H1 (cell line): ENCODE measurements at regions of chr1 and their contacts with region 1.

Region 1: DNA sequence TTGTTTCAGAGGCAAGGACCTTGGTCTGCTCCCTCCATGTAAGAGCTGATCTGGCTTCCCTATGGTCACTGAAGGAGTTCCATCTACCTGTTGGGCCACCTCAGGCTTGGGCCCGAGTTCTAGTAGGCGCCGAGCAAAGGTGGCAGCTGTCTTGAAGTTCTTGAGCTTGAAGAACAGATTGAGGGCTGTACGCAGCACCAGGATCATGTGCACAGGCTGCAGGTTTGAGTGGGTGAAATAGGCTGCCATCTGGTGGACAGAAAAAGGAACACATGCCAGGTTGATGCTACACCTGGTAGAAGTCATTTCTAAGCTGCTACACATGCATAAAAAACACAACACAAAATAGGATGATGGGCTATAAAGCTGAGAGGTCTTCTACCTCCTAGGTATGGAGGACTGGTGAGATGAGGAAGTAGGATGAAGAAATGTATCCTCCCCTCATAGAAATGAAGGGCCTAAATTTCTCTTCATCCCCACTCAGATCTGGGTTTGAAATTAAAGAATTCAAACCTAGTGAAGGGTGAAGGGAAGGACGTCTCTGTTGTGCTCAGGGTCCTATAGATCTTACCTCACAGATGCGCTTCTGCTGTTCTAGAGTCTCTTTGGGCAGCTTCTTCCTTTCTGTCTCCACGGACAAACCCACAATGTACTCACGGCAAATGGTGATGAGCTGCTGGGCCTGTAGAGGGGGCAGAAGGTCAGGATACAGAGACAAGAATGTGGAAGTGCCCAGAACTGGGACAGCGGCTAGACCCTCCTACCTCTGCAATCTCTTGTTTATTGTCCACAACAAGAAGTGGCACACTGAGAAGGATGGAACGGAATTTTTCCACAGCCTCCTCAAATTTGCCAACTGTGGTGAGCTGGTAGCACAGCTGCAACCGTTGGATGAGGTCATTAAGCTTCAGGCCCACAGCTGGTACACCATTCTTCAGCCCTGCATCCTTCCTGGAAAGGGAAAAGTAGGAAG is 6.6 kb upstream of the PEX19 start:
- DNase-seq: peak in 1 of 2 experiments; percentile 62
- H3K4me3 ChIP-seq: no peak overlapping the region
- H3K27ac ChIP-seq: no peak overlapping the region
- H3K4me1 ChIP-seq: no peaks in the 10 kb centered on the region
- H3K27me3 ChIP-seq: no peaks in the 10 kb centered on the region
- CTCF ChIP-seq: peak; percentile 69 to 94 (median 71)
- EP300 ChIP-seq: no peak
- POLR2A ChIP-seq: no peak
- RAD21 ChIP-seq: peak; percentile 58 to 59

Region 2: DNA sequence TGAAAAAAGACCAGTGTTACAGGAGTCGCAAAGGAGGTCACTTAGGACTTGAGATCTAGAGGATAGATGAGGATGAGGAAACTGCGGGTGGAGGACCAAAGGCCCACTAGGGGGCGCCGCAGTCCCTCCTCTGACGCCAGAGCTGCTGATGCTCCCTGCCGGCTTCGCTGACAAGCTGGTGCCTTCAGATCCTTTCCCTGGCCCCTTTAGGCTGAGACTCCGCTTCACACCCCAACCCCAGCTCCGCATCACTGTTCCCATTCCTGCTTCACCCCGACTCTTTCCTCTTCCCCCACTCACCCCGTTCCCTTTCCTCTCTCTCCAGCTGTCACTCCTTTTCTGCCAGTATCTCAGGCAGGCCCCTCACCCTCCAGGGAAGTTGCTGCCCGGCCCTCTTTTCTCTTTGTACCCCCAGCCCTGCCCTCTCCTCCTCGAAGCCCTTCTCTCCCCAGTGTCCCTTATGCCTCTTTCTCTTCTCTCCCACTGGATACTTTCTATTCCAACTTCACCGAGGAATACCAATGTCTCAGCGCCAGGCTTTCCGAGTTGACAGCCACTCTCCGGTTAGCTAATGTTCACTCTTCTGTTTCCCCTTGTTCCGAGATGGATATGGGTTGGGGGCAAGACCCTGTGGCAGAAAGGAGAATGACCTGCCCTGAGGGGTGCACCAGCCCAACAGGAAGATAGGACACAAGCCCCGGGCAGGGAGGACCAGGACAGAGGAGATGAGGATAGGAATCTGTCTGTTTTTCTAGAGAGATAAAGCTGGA is 205.7 kb before region 1 on chr1:
- CTCF ChIA-PET with region 1: interaction called, 16 read pairs
- POLR2A ChIA-PET with region 1: interaction called, 5 read pairs
- DNase-seq: peak; percentile 88 to 96
- H3K4me3 ChIP-seq: no peak overlapping the region
- H3K27ac ChIP-seq: no peak overlapping the region
- H3K4me1 ChIP-seq: peaks cover 0 to 5% (median 3%) of the 10 kb centered on the region in 4 experiments; a peak in 4 of 7 replicates
- H3K27me3 ChIP-seq: peaks cover 0 to 35% (median 27%) of the 10 kb centered on the region in 4 experiments; a peak in 6 of 7 replicates
- CTCF ChIP-seq: peak; percentile 91 to 99 (median 95)
- EP300 ChIP-seq: no peak
- POLR2A ChIP-seq: no peak
- RAD21 ChIP-seq: peak; percentile 83 to 88

Region 3: GRCh38 chr1:160161965-160162705 is 129.4 kb before region 1 on chr1:
- CTCF ChIA-PET with region 1: interaction called, 19 read pairs
- POLR2A ChIA-PET with region 1: no interaction called
- DNase-seq: peak; percentile 54 to 73
- H3K4me3 ChIP-seq: no peak overlapping the region
- H3K27ac ChIP-seq: no peak overlapping the region
- H3K4me1 ChIP-seq: peaks cover 0 to 3% (median 1%) of the 10 kb centered on the region in 4 experiments; a peak in 3 of 7 replicates
- H3K27me3 ChIP-seq: no peaks in the 10 kb centered on the region; a peak in 2 of 7 replicates
- CTCF ChIP-seq: peak; percentile 87 to 98 (median 95)
- EP300 ChIP-seq: no peak
- POLR2A ChIP-seq: no peak
- RAD21 ChIP-seq: peak; percentile 93 to 96

Region 4: DNA sequence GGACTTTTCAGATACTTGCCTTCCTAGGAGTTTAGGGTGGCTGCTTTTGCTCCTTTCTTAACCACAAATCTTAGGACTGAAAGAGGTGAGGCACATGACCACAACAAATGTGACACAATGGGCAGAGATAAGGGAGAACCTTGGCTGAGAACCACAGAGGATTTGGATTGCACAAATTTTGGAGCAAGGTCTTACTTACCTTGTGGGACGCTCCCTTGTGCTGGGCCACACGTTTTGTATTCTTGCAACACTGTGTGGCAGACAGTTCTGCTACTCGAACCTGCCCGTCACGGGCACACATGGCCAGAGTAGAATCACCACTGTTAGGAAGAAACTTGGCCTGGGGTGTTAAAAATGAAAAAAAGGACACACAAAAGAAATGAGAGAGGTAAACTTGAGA is 53.1 kb before region 1 on chr1:
- CTCF ChIA-PET with region 1: interaction called, 24 read pairs
- POLR2A ChIA-PET with region 1: no interaction called
- DNase-seq: no peak
- H3K4me3 ChIP-seq: no peak overlapping the region
- H3K27ac ChIP-seq: no peak overlapping the region
- H3K4me1 ChIP-seq: no peaks in the 10 kb centered on the region
- H3K27me3 ChIP-seq: no peaks in the 10 kb centered on the region
- CTCF ChIP-seq: no peak
- EP300 ChIP-seq: no peak
- POLR2A ChIP-seq: no peak
- RAD21 ChIP-seq: no peak

Region 5: DNA sequence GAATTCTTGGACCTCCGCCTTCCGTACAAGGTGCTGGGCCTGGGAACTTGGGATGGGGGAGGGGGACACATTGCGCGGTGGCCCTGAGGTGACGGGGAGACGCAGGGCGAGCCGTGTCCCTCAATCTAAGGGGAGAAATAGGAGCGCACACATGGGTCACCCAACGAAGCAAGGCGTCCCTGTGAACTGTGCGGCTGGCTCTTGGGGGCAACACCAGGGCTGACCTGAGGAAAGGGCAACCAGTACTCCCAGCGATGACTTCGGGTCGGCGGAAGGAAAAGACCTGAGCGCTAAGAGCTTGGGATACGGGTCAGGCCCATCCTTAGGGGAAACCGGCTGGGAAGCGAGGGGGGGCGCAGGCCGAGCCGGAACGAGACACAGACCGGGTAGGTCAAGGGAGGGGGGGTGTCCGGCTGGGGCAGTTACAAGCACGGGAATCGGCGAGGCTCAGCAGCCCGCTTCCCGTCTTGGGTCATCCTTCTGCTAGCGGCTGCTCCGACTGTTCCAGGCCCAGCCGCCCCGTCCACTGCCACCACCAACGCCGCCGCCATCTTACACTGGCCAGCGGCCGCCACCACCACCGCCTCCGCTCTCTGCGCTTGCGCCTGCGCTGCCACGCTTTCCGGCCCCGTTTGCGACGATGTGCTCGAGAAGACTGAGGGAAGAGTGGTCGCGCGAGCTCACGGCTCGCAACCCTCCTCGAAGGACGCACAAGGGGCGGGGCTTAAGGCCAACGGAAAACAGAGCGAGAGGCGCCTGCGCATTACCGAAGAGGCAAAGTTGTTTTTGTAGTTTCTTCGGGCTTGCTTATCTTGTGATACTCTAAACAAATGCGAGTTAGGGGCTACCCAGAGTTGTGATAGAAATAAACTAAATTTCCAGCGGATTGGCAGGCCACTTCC is 29.4 kb before region 1 on chr1 and contains the start of gene DCAF8:
- CTCF ChIA-PET with region 1: interaction called, 28 read pairs
- POLR2A ChIA-PET with region 1: interaction called, 79 read pairs
- DNase-seq: peak; percentile 92 to 98
- H3K4me3 ChIP-seq: peak within 1 kb of the TSS; percentile 91 to 99 (median 96)
- H3K27ac ChIP-seq: peak within 1 kb of the TSS; percentile 97
- H3K4me1 ChIP-seq: peaks cover 2 to 13% (median 5%) of the 10 kb centered on the region in 4 experiments; a peak in 6 of 7 replicates
- H3K27me3 ChIP-seq: no peaks in the 10 kb centered on the region
- CTCF ChIP-seq: no peak
- EP300 ChIP-seq: no peak
- POLR2A ChIP-seq: peak; percentile 98 to 99
- RAD21 ChIP-seq: no peak
- total RNA-seq, gene DCAF8: 110 and 113 TPM in 2 replicates

Region 6: GRCh38 chr1:160307118-160307854 is 15.8 kb after region 1 on chr1:
- CTCF ChIA-PET with region 1: interaction called, 83 read pairs
- POLR2A ChIA-PET with region 1: interaction called, 11 read pairs
- DNase-seq: peak in 1 of 2 experiments; percentile 56
- H3K4me3 ChIP-seq: 0 out of 8 replicates have a peak overlapping the region, but pooled peaks of 1 of the 4 experiments have one; percentile 12
- H3K27ac ChIP-seq: no peak overlapping the region
- H3K4me1 ChIP-seq: peaks cover 4 to 11% (median 8%) of the 10 kb centered on the region in 4 experiments
- H3K27me3 ChIP-seq: no peaks in the 10 kb centered on the region
- CTCF ChIP-seq: no peak
- EP300 ChIP-seq: no peak
- POLR2A ChIP-seq: no peak
- RAD21 ChIP-seq: no peak

Region 7: DNA sequence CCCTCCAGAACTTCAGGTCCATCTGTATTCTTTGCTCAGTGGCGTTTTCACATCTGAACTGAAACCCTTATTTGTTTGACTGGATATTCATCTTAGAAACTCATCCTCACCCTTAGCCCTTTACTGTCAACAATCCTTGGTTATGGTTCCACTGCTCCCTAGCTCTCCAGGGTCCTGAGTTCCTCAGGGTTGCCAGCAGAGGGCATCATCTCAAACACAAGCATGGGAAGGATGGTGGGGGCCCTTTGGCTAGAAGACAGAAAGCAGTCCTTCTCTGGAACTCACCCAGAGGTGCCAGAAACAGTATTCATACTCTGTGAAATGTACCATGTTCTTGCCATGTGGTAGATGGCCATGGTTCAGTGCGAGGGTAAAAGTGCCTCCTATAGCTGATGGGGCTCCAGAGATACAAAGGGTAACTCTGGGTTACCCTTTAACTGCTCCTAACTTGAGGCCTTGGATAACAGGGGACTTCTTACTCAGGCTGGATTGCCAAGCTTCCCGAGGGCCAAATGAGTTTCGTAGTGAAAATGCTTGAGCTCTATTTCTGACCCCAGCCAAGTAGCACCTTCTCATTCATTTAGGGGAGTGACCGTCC is 63.0 kb after region 1 on chr1:
- CTCF ChIA-PET with region 1: interaction called, 27 read pairs
- POLR2A ChIA-PET with region 1: no interaction called
- DNase-seq: no peak
- H3K4me3 ChIP-seq: no peak overlapping the region
- H3K27ac ChIP-seq: no peak overlapping the region
- H3K4me1 ChIP-seq: no peaks in the 10 kb centered on the region
- H3K27me3 ChIP-seq: no peaks in the 10 kb centered on the region
- CTCF ChIP-seq: peak; percentile 78 to 83 (median 81)
- EP300 ChIP-seq: no peak
- POLR2A ChIP-seq: no peak
- RAD21 ChIP-seq: peak; percentile 65 to 76

Region 8: GRCh38 chr1:160704250-160704649 is 412.7 kb after region 1 on chr1:
- CTCF ChIA-PET with region 1: no interaction called
- POLR2A ChIA-PET with region 1: no interaction called
- DNase-seq: no peak
- H3K4me3 ChIP-seq: no peak overlapping the region
- H3K27ac ChIP-seq: no peak overlapping the region
- H3K4me1 ChIP-seq: peaks cover 0 to 4% (median under 1%) of the 10 kb centered on the region in 4 experiments; a peak in 1 of 7 replicates
- H3K27me3 ChIP-seq: no peaks in the 10 kb centered on the region
- CTCF ChIP-seq: no peak
- EP300 ChIP-seq: no peak
- POLR2A ChIP-seq: no peak
- RAD21 ChIP-seq: no peak